A673 (cell line): ENCODE measurements at regions of chr12 and their contacts with region 1.

Region 1: GRCh38 chr12:106655577-106655976 is 72.8 kb downstream of the RFX4 start:
- DNase-seq: no peak
- H3K4me3 ChIP-seq: no peak overlapping the region
- H3K27ac ChIP-seq: no peak overlapping the region
- H3K4me1 ChIP-seq: no peaks in the 10 kb centered on the region
- H3K27me3 ChIP-seq: peaks cover 32% of the 10 kb centered on the region
- CTCF ChIP-seq: no peak

Region 2: GRCh38 chr12:106446419-106447092 is 209.0 kb before region 1 on chr12:
- CTCF ChIA-PET with region 1: no interaction called
- POLR2A ChIA-PET with region 1: no interaction called
- intact Hi-C with region 1: no loop called
- DNase-seq: no peak
- H3K4me3 ChIP-seq: no peak overlapping the region
- H3K27ac ChIP-seq: no peak overlapping the region
- H3K4me1 ChIP-seq: no peaks in the 10 kb centered on the region
- H3K27me3 ChIP-seq: no peaks in the 10 kb centered on the region
- CTCF ChIP-seq: no peak

Region 3: DNA sequence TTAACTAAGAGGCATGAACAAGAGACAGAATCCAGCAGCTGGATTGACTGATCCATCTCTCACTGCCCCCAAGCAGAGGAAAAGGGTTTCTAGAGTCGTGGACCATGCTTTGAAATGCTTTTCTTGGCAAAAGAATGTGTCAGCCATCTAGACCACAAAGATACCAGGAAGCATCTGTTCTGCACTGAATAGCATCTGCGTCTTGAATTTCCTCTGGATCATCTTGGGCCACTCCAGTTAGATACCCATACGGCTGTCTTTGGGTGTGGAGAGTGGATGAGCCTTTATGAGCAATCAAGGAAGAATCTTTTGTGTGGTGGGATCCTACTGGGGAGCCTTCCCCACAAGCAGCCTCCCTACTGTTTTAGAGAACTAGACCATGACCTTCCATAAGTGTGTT is 88.8 kb before region 1 on chr12:
- CTCF ChIA-PET with region 1: no interaction called
- POLR2A ChIA-PET with region 1: no interaction called
- intact Hi-C with region 1: no loop called
- DNase-seq: no peak
- H3K4me3 ChIP-seq: no peak overlapping the region
- H3K27ac ChIP-seq: no peak overlapping the region
- H3K4me1 ChIP-seq: no peaks in the 10 kb centered on the region
- H3K27me3 ChIP-seq: peaks cover 24% of the 10 kb centered on the region
- CTCF ChIP-seq: no peak

Region 4: GRCh38 chr12:106645074-106645421 is 10.5 kb before region 1 on chr12:
- CTCF ChIA-PET with region 1: interaction called, 11 read pairs
- POLR2A ChIA-PET with region 1: no interaction called
- intact Hi-C with region 1: no loop called
- DNase-seq: peak; percentile 66
- H3K4me3 ChIP-seq: no peak overlapping the region
- H3K27ac ChIP-seq: no peak overlapping the region
- H3K4me1 ChIP-seq: peaks cover 4% of the 10 kb centered on the region
- H3K27me3 ChIP-seq: no peaks in the 10 kb centered on the region
- CTCF ChIP-seq: no peak

Region 5: DNA sequence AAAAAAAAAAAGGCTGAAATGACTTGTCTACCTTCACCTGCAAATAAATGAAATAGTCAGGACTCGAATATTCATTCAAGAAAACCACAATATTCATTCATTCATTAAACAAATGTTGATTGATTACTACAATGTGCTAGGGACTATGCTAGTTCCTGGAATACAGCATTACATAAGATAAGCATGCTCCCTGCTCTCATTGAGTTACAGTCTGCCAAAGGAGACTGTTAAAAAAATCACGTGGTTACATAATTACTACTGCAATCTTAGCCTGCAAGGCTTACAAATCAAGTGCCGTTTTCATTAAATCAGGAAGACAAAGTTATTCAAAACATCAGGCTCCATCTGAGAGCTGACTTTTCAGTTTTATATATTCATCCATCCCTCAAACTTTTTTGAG is 48.5 kb after region 1 on chr12:
- CTCF ChIA-PET with region 1: no interaction called
- POLR2A ChIA-PET with region 1: no interaction called
- intact Hi-C with region 1: no loop called
- DNase-seq: no peak
- H3K4me3 ChIP-seq: no peak overlapping the region
- H3K27ac ChIP-seq: no peak overlapping the region
- H3K4me1 ChIP-seq: no peaks in the 10 kb centered on the region
- H3K27me3 ChIP-seq: no peaks in the 10 kb centered on the region
- CTCF ChIP-seq: no peak